Activated T-helper 2 cell treated with anti-CD3 and anti-CD28 coated beads, Interferon-gamma antibody, Interleukin-2, Interleukin-4, amounts not matched to agents 10 μg/mL and 5 μg/mL and 100 μg/mL, durations not matched to agents 14 hours and 24 hours and 36 hours (primary cell): ENCODE measurements at regions of chr6 and their contacts with region 1.

Region 1: DNA sequence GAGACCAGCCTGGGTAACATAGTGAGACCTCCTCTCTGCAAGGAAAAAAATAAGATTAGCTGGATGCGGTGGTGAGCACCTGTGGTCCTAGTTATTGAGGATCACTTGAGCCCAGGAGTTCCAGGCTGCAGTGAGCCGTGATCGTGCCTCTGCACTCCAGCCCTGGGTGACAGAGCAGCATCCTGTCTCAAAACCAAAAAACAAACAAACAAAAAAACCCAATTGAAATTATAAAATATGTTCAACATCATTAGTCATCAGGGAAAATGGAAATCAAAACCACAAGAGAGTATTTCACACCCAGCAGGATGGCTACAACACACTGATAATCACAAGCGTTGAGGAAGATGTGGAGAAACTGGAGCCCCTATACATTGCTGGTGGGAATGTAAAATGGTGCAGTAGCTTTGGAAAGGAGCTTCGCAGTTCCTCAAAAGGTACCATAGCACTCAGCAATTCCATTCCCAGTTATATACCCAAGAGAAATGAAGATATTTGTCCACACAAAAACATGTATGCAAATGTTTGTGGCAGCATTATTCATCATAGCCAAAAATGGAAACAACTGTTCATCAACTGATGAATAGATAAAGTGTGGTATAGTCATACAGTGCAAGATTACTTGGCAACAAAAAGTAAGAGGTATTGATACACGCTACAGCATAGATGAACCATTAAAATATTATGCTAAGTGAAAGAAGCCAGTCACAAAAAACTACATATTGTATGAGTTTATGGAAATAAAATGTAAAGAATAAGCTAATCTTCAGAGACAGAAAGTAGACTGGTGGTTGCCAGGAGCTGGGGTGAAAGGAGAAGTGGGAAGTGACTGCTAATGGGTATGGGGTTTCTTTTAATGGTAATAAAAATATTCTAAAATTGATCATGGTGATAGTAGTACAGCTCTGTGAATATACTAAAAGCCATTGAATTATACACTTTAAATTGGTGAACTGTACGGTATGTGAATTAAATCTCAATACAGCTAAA is 38.7 kb upstream of the RIPOR2 start:
- DNase-seq: peak; percentile 25
- H3K4me3 Mint-ChIP-seq: peak overlapping the region; percentile 13
- H3K27ac Mint-ChIP-seq: peak overlapping the region; percentile 90
- H3K4me1 Mint-ChIP-seq: peaks cover 35% of the 10 kb centered on the region
- H3K27me3 Mint-ChIP-seq: no peaks in the 10 kb centered on the region

Region 2: GRCh38 chr6:24743265-24743943 is 231.1 kb before region 1 on chr6:
- intact Hi-C with region 1: loop called (anchors 1 kb)
- DNase-seq: no peak
- H3K4me3 Mint-ChIP-seq: no peak overlapping the region
- H3K27ac Mint-ChIP-seq: peak overlapping the region; percentile 79
- H3K4me1 Mint-ChIP-seq: peaks cover 19% of the 10 kb centered on the region
- H3K27me3 Mint-ChIP-seq: no peaks in the 10 kb centered on the region

Region 3: GRCh38 chr6:24927985-24928745 is 46.3 kb before region 1 on chr6:
- intact Hi-C with region 1: loop called (anchors 1 kb)
- DNase-seq: no peak
- H3K4me3 Mint-ChIP-seq: peak overlapping the region; percentile 88
- H3K27ac Mint-ChIP-seq: peak overlapping the region; percentile 97
- H3K4me1 Mint-ChIP-seq: peaks cover 80% of the 10 kb centered on the region
- H3K27me3 Mint-ChIP-seq: no peaks in the 10 kb centered on the region

Region 4: GRCh38 chr6:24951811-24952299 is 22.6 kb before region 1 on chr6:
- intact Hi-C with region 1: loop called (anchors 1 kb)
- DNase-seq: peak; percentile 51
- H3K4me3 Mint-ChIP-seq: peak overlapping the region; percentile 52
- H3K27ac Mint-ChIP-seq: peak overlapping the region; percentile 28
- H3K4me1 Mint-ChIP-seq: peaks cover 73% of the 10 kb centered on the region
- H3K27me3 Mint-ChIP-seq: no peaks in the 10 kb centered on the region

Region 5: DNA sequence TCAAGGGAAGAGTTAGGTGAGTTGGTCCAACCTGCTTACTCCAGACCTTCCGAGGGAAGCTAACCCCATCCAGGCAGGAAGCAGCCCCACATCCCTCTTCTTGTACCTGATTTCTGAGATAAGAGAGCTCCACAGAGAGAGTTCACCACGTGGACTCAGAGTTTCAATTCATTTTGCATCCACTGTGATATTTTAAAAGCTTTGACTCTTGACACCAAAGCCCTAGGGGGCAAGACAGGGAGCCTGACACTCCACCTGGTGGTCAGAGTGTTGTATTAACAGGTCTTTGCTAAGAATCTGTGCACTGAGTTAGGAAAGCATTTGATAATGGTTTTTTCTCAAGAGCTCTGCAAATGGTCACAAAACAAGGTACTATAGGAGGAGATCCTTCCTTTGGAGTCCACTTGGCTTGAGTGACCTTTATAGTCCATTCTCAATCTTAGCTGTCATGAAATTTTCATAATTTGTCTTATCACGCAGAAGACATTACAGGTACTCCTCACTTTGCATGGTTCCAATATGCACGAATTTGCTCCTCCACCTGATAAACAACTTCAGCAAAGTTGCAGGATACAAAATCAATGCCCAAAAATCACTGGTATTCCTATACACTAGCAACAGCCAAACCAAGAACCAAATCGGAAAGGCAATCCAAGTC is 17.5 kb after region 1 on chr6:
- intact Hi-C with region 1: no loop called
- DNase-seq: peak; percentile 59
- H3K4me3 Mint-ChIP-seq: no peak overlapping the region
- H3K27ac Mint-ChIP-seq: peak overlapping the region; percentile 33
- H3K4me1 Mint-ChIP-seq: peaks cover 30% of the 10 kb centered on the region
- H3K27me3 Mint-ChIP-seq: no peaks in the 10 kb centered on the region

Region 6: DNA sequence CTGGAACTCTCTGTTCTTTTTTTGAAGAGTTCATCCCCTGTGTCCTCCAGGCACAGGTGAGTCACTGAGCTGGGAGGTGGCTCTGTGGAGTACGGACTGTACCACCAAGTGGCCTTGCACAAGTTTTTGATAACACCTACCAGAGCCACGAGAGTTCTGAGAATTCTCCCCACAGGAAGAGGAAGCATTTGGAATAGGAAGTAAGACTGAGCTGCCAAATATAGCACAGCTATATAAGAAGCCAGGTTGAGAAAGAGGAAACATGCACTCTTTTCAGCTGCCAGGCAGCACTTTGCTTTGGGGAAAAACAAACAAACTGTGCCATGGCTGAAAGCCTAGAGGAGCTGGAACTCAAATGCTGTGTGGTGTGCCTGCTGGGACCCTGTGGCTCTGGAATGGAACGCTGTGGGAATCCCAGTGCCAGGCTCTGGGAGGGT is 32.1 kb after region 1 on chr6:
- intact Hi-C with region 1: loop called (anchors 1 kb)
- DNase-seq: peak; percentile 41
- H3K4me3 Mint-ChIP-seq: peak overlapping the region; percentile 27
- H3K27ac Mint-ChIP-seq: peak overlapping the region; percentile 83
- H3K4me1 Mint-ChIP-seq: peaks cover 68% of the 10 kb centered on the region
- H3K27me3 Mint-ChIP-seq: no peaks in the 10 kb centered on the region

Region 7: DNA sequence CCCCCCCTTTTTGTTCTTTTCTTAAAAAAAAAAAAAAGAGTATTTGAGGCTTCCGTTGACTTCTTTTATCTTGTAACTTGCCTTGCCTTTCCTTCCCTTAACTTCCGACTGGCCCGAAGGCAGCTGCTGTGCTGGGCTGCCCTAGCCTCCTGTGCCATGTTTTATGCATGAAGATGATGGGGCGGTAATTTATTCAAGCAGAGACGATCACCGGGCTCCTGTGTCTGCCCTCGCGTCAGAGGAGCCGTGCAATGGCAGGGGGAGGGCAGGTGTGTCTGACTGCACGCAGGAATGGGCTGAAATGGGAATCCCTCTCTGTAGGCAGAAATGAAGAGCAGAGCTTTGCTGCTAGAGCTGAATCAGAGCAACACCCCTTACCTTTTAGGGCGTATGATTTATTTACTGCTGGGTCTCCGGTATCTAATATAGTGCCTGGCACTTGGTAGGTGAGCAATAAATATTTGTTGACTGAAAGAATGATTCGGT is 67.6 kb after region 1 on chr6:
- intact Hi-C with region 1: loop called (anchors 1 kb)
- DNase-seq: peak; percentile 25
- H3K4me3 Mint-ChIP-seq: peak overlapping the region; percentile 88
- H3K27ac Mint-ChIP-seq: peak overlapping the region; percentile 86
- H3K4me1 Mint-ChIP-seq: peaks cover 51% of the 10 kb centered on the region
- H3K27me3 Mint-ChIP-seq: no peaks in the 10 kb centered on the region